Activated CD4-positive, alpha-beta T cell treated with anti-CD3 and anti-CD28 coated beads for 36 hours (primary cell): ENCODE measurements at regions of chr12 and their contacts with region 1.

Region 1: DNA sequence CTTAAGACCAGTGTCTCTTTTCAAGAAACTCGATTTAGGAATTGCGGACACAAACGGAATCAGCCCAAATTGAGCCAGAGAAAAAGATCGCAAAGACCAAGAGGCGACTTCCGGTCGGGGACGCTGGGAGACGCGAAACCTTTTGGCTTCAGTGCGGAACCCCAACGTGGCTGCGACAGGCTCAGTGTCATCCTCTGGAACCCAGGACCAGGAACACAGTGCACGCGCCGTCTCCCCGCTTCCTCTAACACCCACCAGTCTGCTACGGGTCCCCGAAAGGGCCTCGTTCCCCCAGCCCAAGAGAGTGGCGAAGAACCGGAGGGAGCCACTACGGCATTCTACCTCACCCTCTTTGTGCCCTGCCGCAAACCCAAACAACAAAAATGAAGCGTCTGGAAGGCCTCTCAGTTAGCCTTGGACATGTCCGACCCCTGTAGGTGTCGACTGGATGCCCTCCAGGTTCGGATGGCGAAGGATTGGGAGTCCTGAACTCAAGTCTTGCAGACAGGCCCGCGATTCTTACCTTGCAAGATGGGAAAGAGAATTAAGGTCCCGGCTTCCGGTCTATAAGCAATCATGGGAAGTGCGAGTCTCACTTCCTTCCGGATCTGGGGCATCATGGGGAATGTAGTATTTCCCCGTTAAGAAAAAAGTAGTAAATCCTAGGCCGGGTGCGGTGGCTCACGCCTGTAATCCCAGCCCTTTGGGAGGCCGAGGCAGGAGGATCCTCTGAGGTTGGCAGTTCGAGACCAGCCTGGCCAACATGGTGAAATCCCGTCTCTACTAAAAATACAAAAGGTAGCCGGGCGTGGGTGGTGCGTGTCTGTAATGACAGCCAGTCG is at the start of gene RPL6:
- DNase-seq: peak; percentile 86
- ATAC-seq: peak; percentile 92
- H3K4me3 Mint-ChIP-seq: peak within 1 kb of the TSS; percentile 93
- H3K27ac Mint-ChIP-seq: peak within 1 kb of the TSS; percentile 100
- H3K4me1 Mint-ChIP-seq: peaks cover 42% of the 10 kb centered on the region
- H3K27me3 Mint-ChIP-seq: no peaks in the 10 kb centered on the region
- total RNA-seq, gene RPL6: 2,097 to 2,202 TPM

Region 2: DNA sequence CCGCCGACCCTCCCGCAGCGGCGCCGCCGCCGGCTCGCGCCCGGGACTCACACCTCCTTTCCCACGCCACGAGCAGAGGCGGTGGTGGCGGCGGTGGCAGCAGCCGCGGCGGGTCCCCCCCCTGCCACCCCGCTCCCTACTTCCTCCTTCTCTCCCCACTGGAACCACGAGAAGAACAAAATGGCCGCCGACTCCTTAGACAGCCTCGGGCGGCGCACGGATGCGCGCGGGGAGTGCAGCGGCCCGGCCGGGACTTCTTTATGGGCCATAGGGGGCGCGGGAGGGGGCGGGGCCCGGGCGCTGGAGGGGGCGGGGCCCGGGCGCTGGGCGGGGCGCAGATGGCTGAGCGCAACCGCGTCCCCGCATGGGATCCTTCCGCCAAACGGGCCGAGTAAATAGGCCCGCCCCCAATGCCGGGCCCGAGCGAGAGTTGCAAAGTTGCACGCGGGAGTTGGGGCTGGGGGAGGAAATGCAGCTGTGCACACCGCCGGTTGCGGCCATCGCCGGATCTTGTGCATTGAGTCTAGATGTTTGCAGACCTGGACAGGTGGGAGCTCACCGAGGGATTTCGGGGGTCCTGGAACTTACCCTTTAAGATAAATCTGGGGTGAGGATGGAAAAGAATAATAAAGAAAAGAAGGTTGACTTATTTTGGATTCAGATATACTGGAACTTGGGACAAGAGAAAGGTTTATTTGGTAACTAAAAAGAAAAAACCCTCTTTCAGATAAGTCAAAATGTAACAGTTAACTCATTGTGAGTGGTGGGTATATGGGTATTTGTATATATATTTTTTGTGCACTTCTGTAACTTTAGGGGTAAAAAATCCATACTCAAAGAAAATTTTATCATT is 1666.3 kb before region 1 on chr12 and contains the start of gene PPP1CC:
- CTCF ChIA-PET with region 1: no interaction called
- POLR2A ChIA-PET with region 1: no interaction called
- intact Hi-C with region 1: loop called in 1 of 2 experiments (anchors 10 kb)
- DNase-seq: peak; percentile 95
- ATAC-seq: peak; percentile 85
- H3K4me3 Mint-ChIP-seq: peak within 1 kb of the TSS; percentile 98
- H3K27ac Mint-ChIP-seq: peak within 1 kb of the TSS; percentile 99
- H3K4me1 Mint-ChIP-seq: peaks cover 34% of the 10 kb centered on the region
- H3K27me3 Mint-ChIP-seq: no peaks in the 10 kb centered on the region
- total RNA-seq, gene PPP1CC: 201 to 283 TPM

Region 3: GRCh38 chr12:111685744-111686517 is 723.4 kb before region 1 on chr12 and contains the starts of genes ACAD10 and BRAP:
- CTCF ChIA-PET with region 1: no interaction called
- POLR2A ChIA-PET with region 1: no interaction called
- intact Hi-C with region 1: loop called (anchors 1 to 10 kb)
- DNase-seq: peak; percentile 95
- ATAC-seq: peak; percentile 97
- H3K4me3 Mint-ChIP-seq: peak within 1 kb of the TSS; percentile 89
- H3K27ac Mint-ChIP-seq: peak within 1 kb of the TSS; percentile 91
- H3K4me1 Mint-ChIP-seq: peaks cover 31% of the 10 kb centered on the region
- H3K27me3 Mint-ChIP-seq: no peaks in the 10 kb centered on the region
- total RNA-seq, gene ACAD10: 25.5 to 27.5 TPM
- total RNA-seq, gene BRAP: 18.3 to 23.6 TPM

Region 4: DNA sequence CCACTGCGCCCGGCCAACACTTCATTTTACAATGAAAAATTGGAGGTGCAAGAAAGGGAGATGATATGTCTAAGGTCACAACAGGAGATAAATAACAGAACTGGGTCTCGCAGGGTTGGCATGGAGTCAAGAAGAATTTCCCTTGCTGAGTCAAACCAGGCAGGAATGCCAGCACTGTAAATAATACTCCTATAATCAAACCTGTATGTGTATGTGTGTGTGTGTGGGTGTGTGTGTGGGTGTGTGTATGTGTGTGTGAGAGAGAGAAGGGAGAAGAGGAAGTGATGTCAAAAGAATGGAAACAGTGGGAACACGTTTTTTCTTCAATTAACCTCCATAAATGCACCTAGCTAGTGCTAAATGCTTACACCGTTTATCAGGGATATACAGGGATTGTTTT is 466.7 kb before region 1 on chr12:
- CTCF ChIA-PET with region 1: interaction called, 4 read pairs
- POLR2A ChIA-PET with region 1: no interaction called
- intact Hi-C with region 1: loop called in 1 of 2 experiments (anchors 1 kb)
- DNase-seq: peak; percentile 7
- ATAC-seq: no peak
- H3K4me3 Mint-ChIP-seq: no peak overlapping the region
- H3K27ac Mint-ChIP-seq: peak overlapping the region; percentile 77
- H3K4me1 Mint-ChIP-seq: peaks cover 15% of the 10 kb centered on the region
- H3K27me3 Mint-ChIP-seq: no peaks in the 10 kb centered on the region

Region 5: GRCh38 chr12:112130441-112130998 is 278.8 kb before region 1 on chr12:
- CTCF ChIA-PET with region 1: no interaction called
- POLR2A ChIA-PET with region 1: interaction called, 6 read pairs
- intact Hi-C with region 1: loop called in 1 of 2 experiments (anchors 1 kb)
- DNase-seq: no peak
- ATAC-seq: peak; percentile 73
- H3K4me3 Mint-ChIP-seq: peak overlapping the region; percentile 51
- H3K27ac Mint-ChIP-seq: peak overlapping the region; percentile 91
- H3K4me1 Mint-ChIP-seq: peaks cover 56% of the 10 kb centered on the region
- H3K27me3 Mint-ChIP-seq: no peaks in the 10 kb centered on the region

Region 6: DNA sequence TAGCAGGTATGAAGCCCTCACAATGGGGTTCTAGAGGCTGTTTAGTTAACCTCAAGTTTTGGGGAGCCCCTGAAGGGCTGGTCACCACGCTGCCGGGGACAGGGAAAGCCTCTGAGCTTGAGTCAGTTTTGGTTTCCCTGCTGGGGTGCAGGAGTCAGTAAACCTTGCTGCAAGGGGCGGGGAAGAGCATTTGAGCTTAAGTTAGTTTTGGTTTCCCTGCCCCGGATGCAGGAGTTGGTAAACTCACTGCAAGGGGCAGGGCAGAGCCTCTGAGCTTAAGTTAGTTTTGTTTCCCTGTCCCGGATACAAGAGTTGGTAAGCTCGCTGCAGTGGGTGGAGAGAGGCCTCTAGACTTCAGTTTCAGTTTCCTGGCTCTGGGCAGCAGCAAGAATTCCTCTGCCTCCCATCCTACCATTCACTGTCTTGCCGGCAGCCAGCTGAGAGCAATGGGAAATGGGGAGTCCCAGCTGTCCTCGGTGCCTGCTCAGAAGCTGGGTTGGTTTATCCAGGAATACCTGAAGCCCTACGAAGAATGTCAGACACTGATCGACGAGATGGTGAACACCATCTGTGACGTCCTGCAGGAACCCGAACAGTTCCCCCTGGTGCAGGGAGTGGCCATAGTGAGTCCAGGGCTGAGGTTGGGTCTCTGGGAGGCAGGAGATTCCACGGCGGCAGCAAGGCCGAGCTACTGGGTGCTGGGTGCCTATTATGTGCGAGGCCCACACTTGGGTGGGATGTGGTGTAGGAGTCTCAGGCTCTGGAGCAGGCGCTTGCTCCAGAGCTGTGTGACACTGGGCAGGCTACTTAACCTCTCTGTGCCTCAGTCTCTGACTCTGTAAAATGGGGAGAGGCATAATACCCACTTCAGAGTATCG is 569.1 kb after region 1 on chr12 and contains the start of gene OAS2:
- CTCF ChIA-PET with region 1: no interaction called
- POLR2A ChIA-PET with region 1: no interaction called
- intact Hi-C with region 1: loop called in 1 of 2 experiments (anchors 1 kb)
- DNase-seq: peak; percentile 90
- ATAC-seq: peak; percentile 93
- H3K4me3 Mint-ChIP-seq: peak within 1 kb of the TSS; percentile 100
- H3K27ac Mint-ChIP-seq: peak within 1 kb of the TSS; percentile 100
- H3K4me1 Mint-ChIP-seq: peaks cover 44% of the 10 kb centered on the region
- H3K27me3 Mint-ChIP-seq: no peaks in the 10 kb centered on the region
- total RNA-seq, gene OAS2: 148 to 278 TPM